ENCODE measurements at regions of chr14 and their contacts with region 1.

Region 1: GRCh38 chr14:55446218-55446654 is 5.8 kb upstream of the TBPL2 start:
- DNase-seq: peak; percentile 87
- H3K4me3 Mint-ChIP-seq: no peak overlapping the region
- H3K27ac Mint-ChIP-seq: no peak overlapping the region
- H3K4me1 Mint-ChIP-seq: peaks cover 16% of the 10 kb centered on the region
- H3K27me3 Mint-ChIP-seq: no peaks in the 10 kb centered on the region

Region 2: DNA sequence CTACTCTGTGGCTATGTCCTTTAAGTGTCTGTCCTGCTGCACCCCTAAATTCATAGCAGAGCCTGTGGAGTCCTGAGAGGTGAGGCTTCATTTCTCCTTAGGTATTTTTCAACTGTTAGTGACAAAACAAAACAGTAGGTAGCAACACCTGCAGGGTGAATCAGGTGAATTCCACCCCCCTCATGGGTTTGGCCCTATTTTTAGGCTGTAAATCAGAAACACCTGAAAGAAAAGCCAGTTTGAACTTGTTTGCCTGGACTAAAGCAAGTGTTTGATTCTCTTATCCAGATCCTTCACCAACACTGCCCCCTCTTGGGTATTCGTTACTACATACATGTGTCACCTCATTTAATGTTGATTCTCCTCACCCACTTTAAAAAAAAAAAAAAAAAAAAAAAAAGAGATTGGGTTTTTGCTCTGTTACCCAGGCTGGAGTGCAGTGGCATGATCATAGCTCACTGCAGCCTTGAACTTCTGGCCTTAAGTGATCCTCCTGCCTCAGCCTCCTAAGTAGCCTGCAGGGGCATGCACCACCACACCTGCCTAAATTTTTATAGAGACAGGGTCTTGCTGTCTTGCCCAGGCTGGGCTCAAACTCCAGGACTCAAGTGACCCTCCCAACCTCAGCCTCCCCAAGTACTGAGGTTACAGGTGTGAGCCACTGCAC is 16.1 kb before region 1 on chr14:
- intact Hi-C with region 1: no loop called
- DNase-seq: peak; percentile 86
- H3K4me3 Mint-ChIP-seq: no peak overlapping the region
- H3K27ac Mint-ChIP-seq: no peak overlapping the region
- H3K4me1 Mint-ChIP-seq: peaks cover 24% of the 10 kb centered on the region
- H3K27me3 Mint-ChIP-seq: no peaks in the 10 kb centered on the region

Region 3: GRCh38 chr14:55458800-55459515 is 12.7 kb after region 1 on chr14:
- intact Hi-C with region 1: loop called (anchors 2 kb)
- DNase-seq: no peak
- H3K4me3 Mint-ChIP-seq: no peak overlapping the region
- H3K27ac Mint-ChIP-seq: no peak overlapping the region
- H3K4me1 Mint-ChIP-seq: peaks cover 7% of the 10 kb centered on the region
- H3K27me3 Mint-ChIP-seq: peaks cover 3% of the 10 kb centered on the region

Region 4: DNA sequence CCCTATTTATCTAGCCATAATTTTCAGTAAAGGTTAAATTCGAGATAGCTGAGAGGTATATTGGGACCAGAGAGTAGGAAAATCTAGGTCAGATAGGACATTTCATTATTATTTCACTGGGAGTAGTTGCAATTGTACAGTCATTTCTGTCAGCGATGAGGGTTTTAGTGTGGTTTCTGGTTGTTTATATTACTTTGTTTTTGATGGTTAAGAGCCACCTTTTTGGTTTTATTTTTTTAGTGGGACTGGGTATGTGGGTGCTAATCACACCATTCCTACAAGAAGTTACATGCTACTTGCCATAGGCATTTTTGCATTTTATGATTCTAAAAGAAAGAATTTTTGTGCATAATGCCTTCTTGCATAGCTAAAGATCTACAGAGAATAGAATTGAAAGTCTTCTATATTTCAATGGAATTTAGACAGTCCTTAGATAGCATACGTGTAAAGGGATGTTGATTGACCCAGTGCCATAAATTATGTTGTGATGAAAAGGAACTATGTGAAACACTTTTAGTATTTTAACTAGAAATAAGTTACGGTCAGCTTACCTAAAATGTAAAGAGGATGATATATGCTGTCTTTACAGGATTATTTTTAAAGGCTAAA is 218.9 kb after region 1 on chr14:
- intact Hi-C with region 1: loop called (anchors 10 kb)
- DNase-seq: no peak
- H3K4me3 Mint-ChIP-seq: no peak overlapping the region
- H3K27ac Mint-ChIP-seq: peak overlapping the region; percentile 8
- H3K4me1 Mint-ChIP-seq: peaks cover 21% of the 10 kb centered on the region
- H3K27me3 Mint-ChIP-seq: no peaks in the 10 kb centered on the region

Region 5: DNA sequence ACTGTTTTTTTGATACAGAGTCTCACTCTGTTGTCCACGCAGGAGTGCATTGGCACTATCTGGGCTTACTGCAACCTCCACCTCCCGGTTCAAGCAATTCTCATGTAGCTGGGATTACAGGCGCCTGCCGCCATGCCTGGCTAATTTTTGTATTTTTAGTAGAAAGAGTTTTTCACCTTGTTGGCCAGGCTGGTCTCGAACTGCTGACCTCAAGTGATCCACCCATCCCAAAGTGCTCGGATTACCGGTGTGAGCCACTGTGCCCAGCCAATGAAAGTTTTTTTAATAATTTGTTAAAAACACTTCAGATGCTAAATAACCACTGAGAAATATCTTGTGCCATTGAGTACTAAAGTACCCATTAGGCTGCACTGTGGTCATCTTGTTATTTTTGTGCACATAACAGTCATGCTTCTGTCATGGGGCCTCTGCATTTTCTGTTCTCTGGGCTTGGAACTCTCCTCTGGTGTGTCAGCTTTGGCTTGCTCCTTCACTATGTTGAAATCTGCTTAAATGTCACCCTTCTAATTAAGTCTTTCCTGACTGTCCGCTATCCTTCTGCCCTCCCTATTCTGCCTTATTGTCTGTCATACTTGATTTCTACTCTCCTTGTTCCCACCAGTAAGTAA is 238.8 kb after region 1 on chr14:
- intact Hi-C with region 1: no loop called
- DNase-seq: no peak
- H3K4me3 Mint-ChIP-seq: no peak overlapping the region
- H3K27ac Mint-ChIP-seq: no peak overlapping the region
- H3K4me1 Mint-ChIP-seq: peaks cover 2% of the 10 kb centered on the region
- H3K27me3 Mint-ChIP-seq: no peaks in the 10 kb centered on the region